Activated naive CD8-positive, alpha-beta T cell treated with anti-CD3 and anti-CD28 coated beads, Interleukin-2, amount 10 ng/mL, durations not matched to agents 7 days and 5 days (primary cell): ENCODE measurements at regions of chr12 and their contacts with region 1.

Region 1: DNA sequence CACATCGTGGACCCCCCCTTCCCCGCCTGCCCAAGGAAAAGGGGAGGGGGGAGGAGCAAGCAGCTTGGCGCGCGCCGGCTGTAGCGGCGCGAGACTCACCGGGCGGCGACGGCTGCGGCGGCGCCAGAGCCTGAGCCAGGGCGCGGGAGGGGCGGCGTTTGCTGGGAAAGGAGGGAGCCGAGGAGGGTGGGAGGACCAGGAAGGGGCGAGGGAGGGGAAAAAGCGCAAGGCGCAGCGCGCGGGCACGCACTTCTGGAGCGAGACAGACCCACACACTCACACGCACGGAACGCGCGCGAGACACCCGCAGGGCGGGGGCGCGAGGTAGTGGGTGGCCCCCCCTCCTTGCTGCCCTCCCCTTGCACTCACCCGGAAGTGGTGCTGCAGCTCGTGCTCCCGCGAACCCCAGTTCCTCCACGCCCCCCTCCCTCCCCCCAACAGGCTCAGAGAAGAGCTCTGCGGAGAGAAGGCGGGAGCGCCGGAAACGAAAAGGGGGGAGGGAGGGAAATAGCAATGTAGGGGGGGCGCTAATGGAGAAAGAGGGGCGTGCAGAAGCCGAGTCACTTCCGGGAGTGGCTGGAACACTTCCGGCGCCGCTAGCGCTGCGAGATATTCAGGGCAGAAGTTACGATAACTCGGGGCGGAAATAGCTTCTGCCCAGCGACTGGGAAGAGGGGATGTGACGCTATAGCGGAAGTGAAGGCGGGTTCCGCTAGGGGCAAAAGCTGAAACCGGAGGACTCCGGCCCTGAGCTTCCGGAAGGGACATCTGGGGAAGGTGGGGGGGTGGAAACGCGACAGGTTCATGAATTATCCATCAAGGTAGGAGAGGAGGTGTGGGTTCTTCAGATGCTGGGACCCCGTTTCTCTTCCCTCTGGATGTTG is at the start of gene ZNF384:
- DNase-seq: peak; percentile 88
- ATAC-seq: peak; percentile 81
- H3K4me3 Mint-ChIP-seq: peak within 1 kb of the TSS; percentile 90
- H3K27ac Mint-ChIP-seq: peak within 1 kb of the TSS; percentile 95
- H3K4me1 Mint-ChIP-seq: peaks cover 37% of the 10 kb centered on the region
- H3K27me3 Mint-ChIP-seq: no peaks in the 10 kb centered on the region
- total RNA-seq, gene ZNF384: 79.5 to 88.2 TPM

Region 2: GRCh38 chr12:6533923-6534694 is 155.1 kb before region 1 on chr12 and contains the start of gene GAPDH:
- POLR2A ChIA-PET with region 1: interaction called, 10 read pairs
- DNase-seq: peak; percentile 91
- ATAC-seq: peak; percentile 62
- H3K4me3 Mint-ChIP-seq: peak within 1 kb of the TSS; percentile 100
- H3K27ac Mint-ChIP-seq: peak within 1 kb of the TSS; percentile 98
- H3K4me1 Mint-ChIP-seq: peaks cover 37% of the 10 kb centered on the region
- H3K27me3 Mint-ChIP-seq: no peaks in the 10 kb centered on the region
- total RNA-seq, gene GAPDH: 4,618 to 4,824 TPM

Region 3: GRCh38 chr12:6613776-6614512 is 75.3 kb before region 1 on chr12:
- POLR2A ChIA-PET with region 1: interaction called, 27 read pairs
- DNase-seq: peak; percentile 65
- ATAC-seq: peak; percentile 48
- H3K4me3 Mint-ChIP-seq: no peak overlapping the region
- H3K27ac Mint-ChIP-seq: peak overlapping the region; percentile 87
- H3K4me1 Mint-ChIP-seq: peaks cover 50% of the 10 kb centered on the region
- H3K27me3 Mint-ChIP-seq: no peaks in the 10 kb centered on the region

Region 4: DNA sequence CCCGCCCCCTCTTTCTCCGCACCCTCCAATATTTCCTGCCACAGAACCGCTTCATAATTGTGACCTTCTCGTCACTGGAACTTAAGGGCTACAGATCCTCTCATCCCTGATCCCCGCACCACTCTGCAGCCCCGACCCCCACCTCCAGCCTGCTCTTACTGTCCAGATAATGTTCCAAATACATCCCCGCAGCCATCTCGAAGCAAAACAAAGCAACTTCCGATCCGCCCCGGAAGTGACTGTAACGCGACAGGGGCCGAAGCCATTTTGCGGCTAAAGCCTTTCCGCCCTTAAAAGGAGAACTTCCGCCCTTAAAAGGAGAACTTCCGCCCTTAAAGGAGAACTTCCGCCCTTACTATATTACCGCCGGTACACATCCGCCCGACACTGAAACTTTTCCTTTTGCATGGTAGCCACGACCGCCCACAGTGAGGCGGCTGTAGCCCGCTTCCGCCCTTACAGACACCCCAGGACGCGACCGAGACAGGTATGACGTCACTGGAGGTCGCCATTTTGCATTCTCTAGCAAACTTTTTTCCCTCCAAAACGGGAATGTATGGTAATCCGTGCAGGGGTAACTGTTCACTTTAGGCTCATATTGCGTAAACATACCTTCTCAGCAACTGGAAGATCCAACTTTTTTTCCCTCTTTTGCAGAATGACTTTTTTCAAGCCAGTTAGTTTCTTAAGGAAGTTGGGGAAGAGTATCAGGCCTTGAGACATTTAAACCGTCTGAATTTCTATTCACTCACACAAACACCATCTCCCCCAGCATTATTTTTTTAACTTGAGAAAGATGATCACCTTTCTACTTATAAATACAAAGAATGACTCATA is 26.1 kb before region 1 on chr12 and contains the start of gene ING4:
- POLR2A ChIA-PET with region 1: interaction called, 22 read pairs
- DNase-seq: peak; percentile 88
- ATAC-seq: peak; percentile 99
- H3K4me3 Mint-ChIP-seq: peak within 1 kb of the TSS; percentile 100
- H3K27ac Mint-ChIP-seq: peak within 1 kb of the TSS; percentile 99
- H3K4me1 Mint-ChIP-seq: peaks cover 13% of the 10 kb centered on the region
- H3K27me3 Mint-ChIP-seq: no peaks in the 10 kb centered on the region
- total RNA-seq, gene ING4: 46.9 to 49.3 TPM

Region 5: DNA sequence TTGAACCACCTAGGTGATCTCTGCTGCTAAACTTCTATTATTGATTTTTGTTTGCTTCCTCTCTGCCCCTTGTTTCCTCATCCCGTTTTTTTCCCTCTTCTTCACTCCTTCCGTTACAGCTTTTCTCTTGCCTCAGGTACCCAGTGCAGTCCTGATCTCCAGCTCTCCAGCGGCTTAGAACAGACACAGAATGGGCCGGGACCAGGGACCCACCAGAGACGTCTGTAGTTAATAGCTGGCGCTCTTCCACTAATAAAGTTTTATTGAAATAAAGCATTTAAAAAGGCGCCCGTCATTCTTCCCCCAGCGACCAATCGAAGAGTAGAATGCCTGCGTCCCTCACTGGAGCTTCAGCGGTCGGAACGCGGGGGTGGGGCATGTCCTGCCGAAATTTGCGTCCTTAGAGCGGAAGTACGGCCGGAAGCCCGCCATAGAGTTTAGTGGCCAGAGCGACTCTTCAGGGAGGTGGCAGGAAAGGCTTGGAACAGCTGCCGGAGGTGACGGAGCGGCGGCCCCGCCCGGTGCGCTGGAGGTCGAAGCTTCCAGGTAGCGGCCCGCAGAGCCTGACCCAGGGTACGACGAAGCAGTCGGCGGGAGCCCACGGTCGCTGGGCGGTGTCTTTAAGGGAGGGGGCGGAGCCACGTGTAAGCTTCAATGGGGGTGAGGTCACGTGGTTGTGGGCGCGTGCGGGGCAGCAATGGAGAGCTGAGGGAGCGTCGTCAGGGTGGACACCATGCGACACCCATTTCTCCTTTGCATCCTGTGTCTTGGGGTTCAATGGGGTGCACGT is 34.6 kb after region 1 on chr12 and contains the start of gene COPS7A:
- POLR2A ChIA-PET with region 1: interaction called, 71 read pairs
- DNase-seq: peak; percentile 93
- ATAC-seq: peak; percentile 97
- H3K4me3 Mint-ChIP-seq: peak within 1 kb of the TSS; percentile 99
- H3K27ac Mint-ChIP-seq: peak within 1 kb of the TSS; percentile 99
- H3K4me1 Mint-ChIP-seq: peaks cover 22% of the 10 kb centered on the region
- H3K27me3 Mint-ChIP-seq: peaks cover 3% of the 10 kb centered on the region
- total RNA-seq, gene COPS7A: 29.8 to 35.6 TPM

Region 6: DNA sequence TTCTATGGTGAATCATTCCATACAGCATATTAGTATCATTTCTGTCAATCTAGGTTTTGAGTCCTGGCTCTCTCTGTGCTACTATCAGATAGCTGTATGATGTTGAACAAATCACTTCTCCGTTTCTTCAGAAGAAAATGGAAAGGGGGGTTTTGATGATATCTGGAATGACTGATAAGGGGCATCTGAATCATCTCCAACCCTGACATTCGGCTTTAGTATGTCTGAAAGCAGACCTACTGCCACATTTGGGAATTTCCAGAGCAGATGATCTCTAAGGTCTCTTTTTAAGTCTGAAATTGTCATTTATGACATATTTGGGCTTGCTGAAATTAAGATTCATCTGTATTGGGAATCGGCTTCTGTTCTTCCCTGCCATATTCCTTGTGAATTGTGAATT is 53.6 kb after region 1 on chr12:
- POLR2A ChIA-PET with region 1: no interaction called
- DNase-seq: no peak
- ATAC-seq: no peak
- H3K4me3 Mint-ChIP-seq: no peak overlapping the region
- H3K27ac Mint-ChIP-seq: no peak overlapping the region
- H3K4me1 Mint-ChIP-seq: peaks cover 16% of the 10 kb centered on the region
- H3K27me3 Mint-ChIP-seq: no peaks in the 10 kb centered on the region

Region 7: DNA sequence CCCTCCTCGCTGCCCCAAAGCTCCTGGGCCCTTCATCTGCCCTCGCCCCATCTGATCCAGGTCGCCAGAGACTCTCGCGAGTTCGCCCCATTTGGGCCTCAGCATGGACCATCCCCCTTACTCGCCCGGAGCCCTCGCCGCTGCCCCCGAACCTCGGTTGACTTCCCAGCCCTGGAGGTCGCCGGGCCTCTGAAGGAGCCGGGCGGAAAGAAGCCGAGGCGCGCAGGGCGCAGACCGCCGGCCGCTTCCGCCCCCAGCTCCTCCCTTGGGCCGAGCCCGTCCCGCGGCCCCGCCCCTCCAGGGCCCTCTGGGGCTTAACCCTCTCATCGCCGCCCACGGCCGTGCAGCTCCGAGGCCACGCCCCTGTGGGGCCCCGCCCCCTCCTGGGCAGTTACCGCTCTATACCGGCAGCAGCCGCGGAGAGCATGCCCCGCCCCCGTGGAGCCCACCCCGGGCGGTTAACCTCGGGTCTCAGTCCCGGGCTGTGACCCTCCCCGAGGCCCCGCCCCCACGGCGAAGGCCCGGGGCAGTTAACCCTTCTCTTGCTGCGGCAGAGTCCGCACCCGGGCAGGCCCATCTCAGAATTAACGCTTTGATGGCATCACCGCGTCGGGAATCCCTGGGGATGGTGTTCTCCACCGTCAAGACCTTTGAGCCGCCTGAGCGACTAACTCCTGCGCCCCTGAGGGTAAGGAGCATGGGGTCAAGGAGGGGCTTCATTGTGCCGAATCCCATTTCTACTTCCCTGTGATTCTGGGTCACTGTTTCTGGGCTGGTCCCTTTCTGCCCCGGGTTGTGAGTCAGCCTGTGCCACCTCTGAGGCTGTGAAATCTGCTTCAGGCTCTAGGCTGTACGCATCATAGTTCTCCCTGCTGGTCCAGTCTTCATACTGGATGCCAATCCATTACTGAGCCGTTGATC is 184.1 kb after region 1 on chr12 and contains the start of gene SPSB2:
- POLR2A ChIA-PET with region 1: interaction called, 15 read pairs
- DNase-seq: peak; percentile 100
- ATAC-seq: peak; percentile 78
- H3K4me3 Mint-ChIP-seq: peak within 1 kb of the TSS; percentile 94
- H3K27ac Mint-ChIP-seq: peak within 1 kb of the TSS; percentile 93
- H3K4me1 Mint-ChIP-seq: peaks cover 48% of the 10 kb centered on the region
- H3K27me3 Mint-ChIP-seq: no peaks in the 10 kb centered on the region
- total RNA-seq, gene SPSB2: 16.4 to 17.0 TPM

Region 8: GRCh38 chr12:7162691-7163114 is 473.5 kb after region 1 on chr12:
- POLR2A ChIA-PET with region 1: no interaction called
- DNase-seq: no peak
- ATAC-seq: peak; percentile 66
- H3K4me3 Mint-ChIP-seq: peak overlapping the region; percentile 31
- H3K27ac Mint-ChIP-seq: no peak overlapping the region
- H3K4me1 Mint-ChIP-seq: peaks cover 6% of the 10 kb centered on the region
- H3K27me3 Mint-ChIP-seq: peaks cover 29% of the 10 kb centered on the region